Left cardiac atrium (tissue), 4 donors: ENCODE measurements at regions of chr17 and their contacts with region 1.

Region 1: DNA sequence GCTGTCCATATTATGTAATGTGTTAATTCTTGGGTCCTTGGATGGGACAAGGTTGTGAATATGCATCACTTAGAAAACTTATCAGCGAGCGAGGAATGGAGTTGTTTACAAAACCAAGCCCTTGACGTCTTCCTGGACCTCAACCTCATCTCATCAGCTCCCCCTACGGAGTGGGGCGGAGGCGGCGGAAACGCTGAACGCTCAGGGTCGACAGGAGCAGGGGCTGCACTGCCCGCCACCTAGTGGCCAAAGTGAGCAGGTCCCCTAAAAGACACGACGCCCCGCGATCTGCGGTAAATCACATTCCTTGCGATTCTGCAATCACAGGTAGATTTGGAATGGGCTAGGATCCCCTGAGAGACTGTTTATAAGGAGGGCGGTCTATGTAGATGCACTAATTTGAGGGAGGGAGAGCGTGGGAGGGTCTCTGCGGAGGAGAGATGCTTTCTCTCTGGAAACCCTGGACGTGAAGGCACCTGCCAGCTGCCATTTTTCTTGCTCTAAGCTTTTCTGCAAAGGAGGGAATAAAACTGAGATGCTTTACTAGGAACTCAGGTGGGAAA is 5.4 kb upstream of the ICAM2 start:
- DNase-seq: peak; percentile 85
- ATAC-seq: peak; percentile 79

Region 2: DNA sequence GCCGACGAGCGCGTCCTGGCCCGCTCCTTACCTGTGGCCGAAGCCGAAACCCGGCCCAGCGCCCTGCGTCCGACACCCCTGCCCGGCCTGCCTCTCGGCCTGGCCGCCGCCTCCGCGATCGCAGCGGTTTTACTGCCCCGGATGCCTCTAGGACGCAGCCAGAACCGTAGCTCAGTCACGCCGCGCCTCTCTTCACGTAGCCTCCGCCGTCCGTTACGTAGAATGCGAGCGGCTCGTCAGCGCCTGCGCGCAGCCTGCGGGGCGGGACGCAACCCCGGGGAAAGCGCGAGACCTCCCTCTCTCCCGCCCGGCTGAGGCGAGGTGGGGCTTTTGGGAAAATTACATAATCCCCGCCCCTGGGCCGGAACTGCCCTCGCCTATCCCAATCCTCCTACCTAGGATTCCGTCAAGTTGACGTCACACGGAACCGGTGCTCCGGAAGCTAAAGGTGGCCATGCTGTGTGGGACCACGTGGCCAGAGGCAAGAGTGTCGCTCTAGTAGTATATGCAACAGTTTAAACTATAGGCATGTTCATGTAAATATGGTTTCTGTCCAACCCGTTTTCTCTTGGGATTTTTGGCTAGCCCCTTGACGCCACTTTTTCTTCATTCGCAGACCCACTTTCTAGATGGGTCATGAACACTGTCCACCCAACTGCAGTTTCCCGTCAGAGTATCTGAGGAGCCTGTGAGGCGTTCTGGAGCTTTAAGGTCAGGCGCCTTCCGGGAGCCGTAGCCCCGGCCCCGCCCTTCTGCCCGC is 252.3 kb before region 1 on chr17 and contains the start of gene CCDC47:
- intact Hi-C with region 1: no loop called
- DNase-seq: peak; percentile 98
- ATAC-seq: peak; percentile 94 to 96
- total RNA-seq, gene CCDC47: 88.9 to 139 TPM

Region 3: DNA sequence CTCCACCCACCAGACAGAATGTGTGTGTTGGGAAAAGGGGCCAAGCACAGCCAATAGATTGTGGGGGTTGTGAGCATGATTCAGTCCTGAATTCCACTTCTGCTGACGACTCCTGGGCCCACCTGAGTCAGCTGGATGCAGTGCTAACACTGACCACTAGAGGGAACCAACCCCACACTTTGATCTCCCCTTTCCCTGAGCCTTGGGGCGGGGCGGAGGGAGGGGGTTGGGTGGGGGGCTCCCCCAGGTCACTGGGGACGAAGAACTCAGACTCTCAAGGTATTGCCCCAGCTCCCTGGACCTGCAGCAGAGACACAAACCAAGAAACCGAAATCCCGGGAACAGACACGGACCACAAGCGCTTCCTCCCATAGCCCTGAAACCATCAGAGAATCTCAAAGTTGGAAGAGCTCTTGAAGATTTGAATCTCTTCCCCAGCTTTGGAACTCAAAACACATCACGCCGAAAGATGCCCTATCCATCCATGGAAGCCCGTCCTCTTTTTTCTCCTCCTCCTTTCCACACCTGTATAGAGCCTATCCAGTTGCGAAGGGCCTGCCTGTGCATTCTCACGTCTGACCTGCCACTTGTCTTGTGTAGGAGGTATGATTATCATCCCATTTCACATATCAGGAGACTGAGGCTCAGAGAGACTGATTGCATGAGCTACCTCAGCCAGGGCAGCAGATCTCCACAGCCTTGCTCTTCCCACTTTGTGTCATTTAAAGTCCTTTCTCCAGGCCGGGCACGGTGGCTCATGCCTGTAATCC is 114.0 kb before region 1 on chr17:
- intact Hi-C with region 1: loop called (anchors 5 to 10 kb)
- DNase-seq: no peak
- ATAC-seq: peak; percentile 65 to 69

Region 4: GRCh38 chr17:63919311-63919723 is 106.5 kb before region 1 on chr17:
- intact Hi-C with region 1: loop called (anchors 5 to 10 kb)
- DNase-seq: peak; percentile 44
- ATAC-seq: peak; percentile 89 to 92